ENCODE measurements at regions of chr1 and their contacts with region 1.

Region 1: DNA sequence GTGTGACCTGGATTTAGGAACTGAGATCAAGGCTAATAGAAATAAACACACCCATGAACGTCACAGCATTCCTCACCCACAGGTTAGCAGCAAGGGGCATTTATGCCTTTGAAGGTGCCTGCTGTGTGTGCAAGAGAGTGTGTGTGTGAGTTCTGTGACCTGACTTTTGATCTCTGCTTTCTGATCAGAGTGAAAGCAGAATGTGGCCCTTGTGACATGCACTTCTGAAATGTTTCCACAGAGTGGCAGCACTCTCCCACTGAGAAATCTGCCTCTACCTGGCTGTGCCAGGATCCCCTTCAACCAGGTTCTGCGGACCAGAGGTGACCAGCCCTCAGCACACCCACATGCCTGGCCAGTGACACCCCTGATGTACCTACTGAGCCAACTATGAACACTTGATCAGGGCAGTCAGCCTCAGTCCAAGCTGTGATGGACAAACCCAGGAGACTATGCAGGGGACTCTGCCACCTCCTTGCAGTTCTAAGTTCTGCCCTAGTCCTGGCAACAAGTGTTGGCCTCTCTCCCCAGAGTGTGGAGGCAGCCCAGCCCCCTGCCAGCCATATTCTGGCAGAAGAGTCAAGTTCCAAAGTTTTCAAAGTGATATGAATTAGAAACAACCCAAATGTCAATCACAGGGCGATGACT is 41.0 kb downstream of the RXRG start:
- DNase-seq: peak; percentile 25 to 39 (median 32)
- ATAC-seq: no peak
- H3K4me3 ChIP-seq: no peak overlapping the region
- H3K27ac ChIP-seq: no peak overlapping the region
- H3K4me1 ChIP-seq: no peaks in the 10 kb centered on the region
- H3K27me3 ChIP-seq: no peaks in the 10 kb centered on the region
- CTCF ChIP-seq: peak in 6 of 7 experiments; percentile 22 to 62 (median 53)
- POLR2A ChIP-seq: no peak

Region 2: GRCh38 chr1:165586435-165586834 is 182.5 kb after region 1 on chr1:
- intact Hi-C with region 1: loop called (anchors 5 kb)
- DNase-seq: no peak
- ATAC-seq: no peak
- H3K4me3 ChIP-seq: no peak overlapping the region
- H3K27ac ChIP-seq: no peak overlapping the region
- H3K4me1 ChIP-seq: no peaks in the 10 kb centered on the region
- H3K27me3 ChIP-seq: no peaks in the 10 kb centered on the region
- CTCF ChIP-seq: no peak
- POLR2A ChIP-seq: no peak

Measured in body of pancreas (tissue), 4 donors.